Activated T-helper 1 cell treated with anti-CD3 and anti-CD28 coated beads, Interleukin-12 subunit alpha, Interleukin-12 subunit beta, Interleukin-2, Interleukin-4 antibody, amounts not matched to agents 30 ng/mL and 10 ng/mL and 1 ng/mL, durations not matched to agents 14 hours and 24 hours and 36 hours (primary cell): ENCODE measurements at regions of chr18 and their contacts with region 1.

Region 1: GRCh38 chr18:47748847-47749599 is 181.4 kb downstream of the SMAD2 start:
- DNase-seq: peak; percentile 80
- H3K4me3 Mint-ChIP-seq: no peak overlapping the region
- H3K27ac Mint-ChIP-seq: no peak overlapping the region
- H3K4me1 Mint-ChIP-seq: peaks cover 5% of the 10 kb centered on the region
- H3K27me3 Mint-ChIP-seq: peaks cover 14% of the 10 kb centered on the region

Region 2: DNA sequence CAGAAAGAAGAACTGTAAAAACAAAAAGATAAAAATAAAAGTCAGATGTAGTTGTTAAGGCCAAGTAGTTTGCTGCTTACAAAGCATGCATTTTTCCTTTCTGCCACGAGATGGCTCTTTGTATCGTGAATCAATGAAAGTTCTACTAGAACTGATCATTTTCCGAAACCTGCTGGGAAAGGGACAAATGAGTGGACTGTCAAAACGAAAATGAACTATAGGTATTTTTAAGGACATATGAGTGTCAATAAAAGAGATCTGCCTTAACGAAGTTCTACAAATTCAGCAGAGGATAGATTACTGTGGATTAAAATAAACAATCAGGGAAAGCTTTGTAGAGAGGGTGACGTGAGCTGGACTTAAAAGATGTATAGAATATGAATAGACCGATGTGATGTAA is 698.6 kb before region 1 on chr18:
- intact Hi-C with region 1: loop called (anchors 1 kb)
- DNase-seq: peak; percentile 1
- H3K4me3 Mint-ChIP-seq: no peak overlapping the region
- H3K27ac Mint-ChIP-seq: no peak overlapping the region
- H3K4me1 Mint-ChIP-seq: no peaks in the 10 kb centered on the region
- H3K27me3 Mint-ChIP-seq: peaks cover 11% of the 10 kb centered on the region

Region 3: GRCh38 chr18:47100214-47100831 is 648.7 kb before region 1 on chr18:
- intact Hi-C with region 1: loop called (anchors 1 kb)
- DNase-seq: peak; percentile 16
- H3K4me3 Mint-ChIP-seq: no peak overlapping the region
- H3K27ac Mint-ChIP-seq: no peak overlapping the region
- H3K4me1 Mint-ChIP-seq: no peaks in the 10 kb centered on the region
- H3K27me3 Mint-ChIP-seq: no peaks in the 10 kb centered on the region

Region 4: GRCh38 chr18:47215554-47216138 is 533.4 kb before region 1 on chr18:
- intact Hi-C with region 1: loop called (anchors 1 kb)
- DNase-seq: no peak
- H3K4me3 Mint-ChIP-seq: no peak overlapping the region
- H3K27ac Mint-ChIP-seq: no peak overlapping the region
- H3K4me1 Mint-ChIP-seq: no peaks in the 10 kb centered on the region
- H3K27me3 Mint-ChIP-seq: peaks cover 39% of the 10 kb centered on the region

Region 5: DNA sequence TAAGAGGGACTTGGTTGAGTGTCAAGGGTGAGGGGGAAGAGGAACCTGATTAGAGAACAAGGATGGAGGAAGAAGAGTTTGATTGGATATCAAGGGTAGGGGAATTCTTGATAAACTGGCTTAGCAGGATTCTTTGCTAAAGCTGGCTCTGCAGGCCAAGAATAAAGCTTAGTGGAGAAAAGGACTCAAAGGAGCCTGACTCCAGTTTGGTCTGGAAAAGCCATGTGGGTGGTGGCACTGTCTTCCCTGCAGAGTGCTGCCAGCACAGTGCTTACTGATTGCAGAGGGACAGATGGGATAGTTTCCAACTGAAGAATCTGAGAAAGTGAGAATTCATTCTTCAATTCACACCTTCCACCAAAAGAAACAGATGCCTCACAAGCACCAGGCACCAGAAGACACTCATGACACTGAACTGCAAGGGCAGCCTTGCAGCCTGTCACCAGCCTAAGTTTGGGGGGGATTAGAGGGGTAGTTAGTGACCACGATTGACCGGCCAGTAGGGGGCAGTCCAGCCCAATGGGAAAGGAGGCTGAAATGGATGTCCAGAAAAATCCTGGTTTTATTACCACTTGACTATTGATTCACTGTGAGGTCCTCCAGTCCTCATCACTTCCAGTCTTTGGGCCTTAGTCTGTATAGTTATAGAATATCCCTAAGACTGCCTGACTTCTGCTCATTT is 153.1 kb before region 1 on chr18:
- intact Hi-C with region 1: loop called (anchors 1 kb)
- DNase-seq: no peak
- H3K4me3 Mint-ChIP-seq: no peak overlapping the region
- H3K27ac Mint-ChIP-seq: peak overlapping the region; percentile 74
- H3K4me1 Mint-ChIP-seq: peaks cover 5% of the 10 kb centered on the region
- H3K27me3 Mint-ChIP-seq: peaks cover 8% of the 10 kb centered on the region

Region 6: GRCh38 chr18:47944972-47945843 is 196.2 kb after region 1 on chr18:
- intact Hi-C with region 1: no loop called
- DNase-seq: no peak
- H3K4me3 Mint-ChIP-seq: no peak overlapping the region
- H3K27ac Mint-ChIP-seq: no peak overlapping the region
- H3K4me1 Mint-ChIP-seq: peaks cover 6% of the 10 kb centered on the region
- H3K27me3 Mint-ChIP-seq: peaks cover 15% of the 10 kb centered on the region